GM12878 (cell line): ENCODE measurements at regions of chr2 and their contacts with region 1.

Region 1: GRCh38 chr2:42196403-42197267 is 27.5 kb downstream of the EML4 start:
- DNase-seq: peak; percentile 11
- ATAC-seq: peak; percentile 78
- H3K4me3 ChIP-seq: no peak overlapping the region
- H3K27ac ChIP-seq: no peak overlapping the region
- H3K4me1 ChIP-seq: peaks cover 19% of the 10 kb centered on the region; the same call in 1 of the 2 replicates
- H3K27me3 ChIP-seq: no peaks in the 10 kb centered on the region
- CTCF ChIP-seq: peak; percentile 48 to 76 (median 52); a peak in 5 of 6 replicates
- EP300 ChIP-seq: no peak
- POLR2A ChIP-seq: no peak
- RAD21 ChIP-seq: peak; percentile 68

Region 2: DNA sequence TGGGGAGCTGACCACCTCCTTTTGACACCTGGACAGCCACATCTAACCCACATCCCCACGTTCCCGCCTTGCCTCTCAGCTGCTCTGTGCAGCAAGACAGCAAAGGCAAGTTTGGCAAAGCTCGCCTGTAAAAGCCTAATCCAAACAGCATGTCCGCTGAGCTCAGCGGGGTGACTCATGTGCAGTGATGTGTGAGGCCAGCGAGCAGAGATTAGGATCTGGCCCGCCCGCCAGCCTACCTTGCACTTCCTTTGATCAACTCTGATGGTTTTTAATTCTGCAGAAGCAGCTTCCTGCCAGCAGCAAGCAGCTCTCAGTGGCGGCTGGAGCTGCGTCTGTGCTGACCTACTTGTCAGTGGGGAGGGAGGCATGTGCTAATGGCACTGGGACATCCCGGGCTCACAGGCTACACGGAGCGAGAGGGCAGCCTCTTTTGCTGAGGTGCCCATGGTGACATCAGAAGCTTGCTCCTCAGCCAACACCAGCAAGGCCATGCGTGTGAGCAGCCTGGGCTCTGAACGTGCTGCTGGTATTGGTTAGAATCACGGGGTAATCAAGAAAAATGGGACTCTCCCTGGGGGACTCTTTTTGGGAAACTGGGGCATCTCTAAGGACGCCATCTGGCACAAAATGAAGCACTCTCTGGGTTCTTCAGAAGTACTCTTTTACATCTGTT is 63.5 kb before region 1 on chr2:
- CTCF ChIA-PET with region 1: interaction called, 6 read pairs
- POLR2A ChIA-PET with region 1: interaction called, 3 read pairs
- RAD21 ChIA-PET with region 1: interaction called, 7 read pairs
- SMC1A ChIA-PET with region 1: interaction called, 13 read pairs
- in situ Hi-C with region 1: no loop called
- intact Hi-C with region 1: no loop called
- DNase-seq: peak; percentile 65
- ATAC-seq: peak; percentile 85
- H3K4me3 ChIP-seq: peak overlapping the region; percentile 18; the same call in 1 of the 2 replicates
- H3K27ac ChIP-seq: peak overlapping the region; percentile 9
- H3K4me1 ChIP-seq: peaks cover 50% of the 10 kb centered on the region
- H3K27me3 ChIP-seq: no peaks in the 10 kb centered on the region
- CTCF ChIP-seq: no peak
- EP300 ChIP-seq: no peak
- POLR2A ChIP-seq: peak; percentile 75
- RAD21 ChIP-seq: peak; percentile 11; the same call in 1 of the 2 replicates

Region 3: GRCh38 chr2:42156721-42157120 is 39.9 kb before region 1 on chr2:
- CTCF ChIA-PET with region 1: no interaction called
- POLR2A ChIA-PET with region 1: no interaction called
- RAD21 ChIA-PET with region 1: no interaction called
- SMC1A ChIA-PET with region 1: no interaction called
- in situ Hi-C with region 1: no loop called
- intact Hi-C with region 1: no loop called
- DNase-seq: no peak
- ATAC-seq: no peak
- H3K4me3 ChIP-seq: no peak overlapping the region
- H3K27ac ChIP-seq: no peak overlapping the region
- H3K4me1 ChIP-seq: no peaks in the 10 kb centered on the region
- H3K27me3 ChIP-seq: no peaks in the 10 kb centered on the region
- CTCF ChIP-seq: no peak
- EP300 ChIP-seq: no peak
- POLR2A ChIP-seq: no peak
- RAD21 ChIP-seq: no peak

Region 4: DNA sequence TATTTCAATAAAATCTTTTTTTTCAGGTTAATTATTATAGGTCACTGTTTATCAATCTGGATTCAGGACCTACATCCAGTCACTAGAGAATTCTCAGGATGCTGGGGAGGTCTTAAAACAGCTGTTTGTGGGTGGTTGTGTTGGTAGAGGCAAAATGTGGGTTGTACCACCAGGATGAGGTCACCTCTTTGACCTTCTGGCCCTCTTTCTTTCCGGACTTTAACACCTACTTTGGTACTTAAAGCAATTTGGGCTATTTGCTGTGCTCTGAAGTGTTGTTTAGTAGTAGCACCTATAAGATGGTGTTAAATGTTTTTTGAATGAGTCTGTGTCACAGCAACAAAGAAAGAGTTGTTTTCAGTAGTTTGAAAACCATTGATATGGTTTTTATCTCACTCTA is 12.9 kb before region 1 on chr2:
- CTCF ChIA-PET with region 1: interaction called, 12 read pairs
- POLR2A ChIA-PET with region 1: interaction called, 3 read pairs
- RAD21 ChIA-PET with region 1: interaction called, 10 read pairs
- SMC1A ChIA-PET with region 1: interaction called, 19 read pairs
- in situ Hi-C with region 1: no loop called
- intact Hi-C with region 1: no loop called
- DNase-seq: no peak
- ATAC-seq: peak; percentile 75
- H3K4me3 ChIP-seq: no peak overlapping the region
- H3K27ac ChIP-seq: 0 out of 2 replicates have a peak overlapping the region, but pooled peaks have one; percentile 35
- H3K4me1 ChIP-seq: peaks cover 3% of the 10 kb centered on the region; the same call in 1 of the 2 replicates
- H3K27me3 ChIP-seq: no peaks in the 10 kb centered on the region
- CTCF ChIP-seq: no peak
- EP300 ChIP-seq: no peak
- POLR2A ChIP-seq: no peak
- RAD21 ChIP-seq: no peak

Region 5: DNA sequence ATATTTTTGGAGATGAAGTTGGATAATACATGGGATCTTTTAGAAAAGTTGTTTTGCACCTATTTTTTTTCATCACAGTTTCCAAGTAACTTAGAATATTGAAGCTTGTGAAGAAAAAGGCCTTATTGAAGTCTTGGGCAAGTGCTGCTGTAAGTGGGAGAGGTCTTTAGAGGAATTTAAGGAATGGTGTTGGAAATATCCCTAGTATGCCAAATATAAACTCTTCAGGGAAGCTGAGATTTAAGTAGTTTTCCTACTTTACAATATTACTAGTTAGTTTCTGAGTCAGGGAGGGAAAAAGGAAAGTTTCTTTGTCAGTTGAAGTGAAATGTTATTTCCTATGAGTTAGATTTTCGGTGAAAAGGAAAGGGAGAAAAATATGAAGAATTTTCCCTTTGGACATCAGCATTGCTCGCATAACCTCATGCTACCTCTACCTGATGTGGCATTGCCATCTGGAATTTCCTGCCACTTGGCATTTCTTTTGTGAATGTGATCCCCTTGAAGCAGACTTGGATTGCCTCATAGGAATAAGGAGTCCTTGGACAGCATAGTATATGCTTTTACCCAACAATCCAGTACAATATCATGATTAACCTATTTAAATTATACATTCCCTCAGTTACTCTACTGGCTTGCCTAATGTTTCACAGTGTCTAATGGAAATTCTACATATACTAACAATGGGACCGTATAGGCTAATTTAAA is 1452.5 kb after region 1 on chr2:
- CTCF ChIA-PET with region 1: no interaction called
- POLR2A ChIA-PET with region 1: no interaction called
- RAD21 ChIA-PET with region 1: no interaction called
- SMC1A ChIA-PET with region 1: no interaction called
- in situ Hi-C with region 1: no loop called
- intact Hi-C with region 1: no loop called
- DNase-seq: no peak
- ATAC-seq: no peak
- H3K4me3 ChIP-seq: no peak overlapping the region
- H3K27ac ChIP-seq: no peak overlapping the region
- H3K4me1 ChIP-seq: no peaks in the 10 kb centered on the region
- H3K27me3 ChIP-seq: no peaks in the 10 kb centered on the region
- CTCF ChIP-seq: no peak
- EP300 ChIP-seq: no peak
- POLR2A ChIP-seq: no peak
- RAD21 ChIP-seq: no peak